A549 (cell line): ENCODE measurements at regions of chr22 and their contacts with region 1.

Region 1: GRCh38 chr22:17057959-17058814 is 26.6 kb upstream of the IL17RA start:
- DNase-seq: peak; percentile 37 to 68
- ATAC-seq: peak; percentile 84 to 96; a peak in 5 of 6 replicates
- H3K4me3 ChIP-seq: no peak overlapping the region
- H3K27ac ChIP-seq: no peak overlapping the region
- H3K4me1 ChIP-seq: no peaks in the 10 kb centered on the region
- CTCF ChIP-seq: peak; percentile 56
- EP300 ChIP-seq: no peak
- POLR2A ChIP-seq: no peak
- RAD21 ChIP-seq: peak; percentile 54 to 66

Region 2: DNA sequence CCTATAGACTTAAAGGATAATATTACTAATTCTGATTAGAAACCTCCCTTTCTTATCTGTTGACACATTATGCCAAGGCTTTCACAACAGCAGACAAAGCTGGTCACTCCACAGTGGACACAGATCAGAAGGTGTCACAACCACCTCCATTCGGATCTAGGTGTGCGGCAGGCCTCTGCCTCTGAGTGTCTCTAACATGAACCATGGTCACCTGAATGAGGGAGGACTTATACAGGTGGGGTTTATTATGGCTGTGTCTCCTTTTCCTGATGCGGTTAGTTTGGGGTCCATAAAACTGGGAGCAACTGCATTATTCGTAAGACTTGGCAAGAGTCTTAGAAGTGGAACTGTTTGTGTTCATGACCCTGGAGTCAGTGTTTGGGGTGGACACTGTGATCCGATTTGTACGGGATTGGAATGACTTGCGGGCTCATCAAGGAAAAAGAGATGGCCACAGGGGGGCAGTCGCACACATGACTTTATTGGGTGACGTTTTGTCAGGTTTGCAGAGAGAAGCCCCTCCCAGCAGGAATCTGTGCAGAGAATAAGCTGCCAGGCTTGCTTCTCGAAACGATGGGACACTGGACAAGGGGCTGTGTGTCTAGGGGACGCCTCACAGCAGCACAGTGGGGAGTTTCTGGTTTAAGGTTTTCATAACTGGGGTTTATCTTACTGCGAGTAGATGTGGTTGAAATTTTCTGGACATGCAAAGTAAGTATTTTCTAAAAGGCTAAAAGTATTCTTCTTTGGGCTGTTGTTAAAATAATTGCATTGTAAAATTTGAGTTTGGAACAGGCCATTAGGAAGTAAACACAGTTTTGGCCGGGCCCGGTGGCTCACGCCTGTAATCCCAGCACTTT is 140.8 kb before region 1 on chr22:
- CTCF ChIA-PET with region 1: interaction called, 36 read pairs
- POLR2A ChIA-PET with region 1: no interaction called
- DNase-seq: peak; percentile 33 to 65
- ATAC-seq: peak; percentile 83 to 87
- H3K4me3 ChIP-seq: no peak overlapping the region
- H3K27ac ChIP-seq: no peak overlapping the region
- H3K4me1 ChIP-seq: no peaks in the 10 kb centered on the region
- CTCF ChIP-seq: peak; percentile 35; the same call in 2 of the 3 replicates
- EP300 ChIP-seq: no peak
- POLR2A ChIP-seq: no peak
- RAD21 ChIP-seq: peak; percentile 47 to 48; a peak in 3 of 5 replicates

Region 3: GRCh38 chr22:16925407-16925966 is 132.7 kb before region 1 on chr22:
- CTCF ChIA-PET with region 1: interaction called, 24 read pairs
- POLR2A ChIA-PET with region 1: no interaction called
- DNase-seq: no peak
- ATAC-seq: no peak
- H3K4me3 ChIP-seq: no peak overlapping the region
- H3K27ac ChIP-seq: no peak overlapping the region
- H3K4me1 ChIP-seq: no peaks in the 10 kb centered on the region
- CTCF ChIP-seq: no peak
- EP300 ChIP-seq: no peak
- POLR2A ChIP-seq: no peak
- RAD21 ChIP-seq: no peak

Region 4: DNA sequence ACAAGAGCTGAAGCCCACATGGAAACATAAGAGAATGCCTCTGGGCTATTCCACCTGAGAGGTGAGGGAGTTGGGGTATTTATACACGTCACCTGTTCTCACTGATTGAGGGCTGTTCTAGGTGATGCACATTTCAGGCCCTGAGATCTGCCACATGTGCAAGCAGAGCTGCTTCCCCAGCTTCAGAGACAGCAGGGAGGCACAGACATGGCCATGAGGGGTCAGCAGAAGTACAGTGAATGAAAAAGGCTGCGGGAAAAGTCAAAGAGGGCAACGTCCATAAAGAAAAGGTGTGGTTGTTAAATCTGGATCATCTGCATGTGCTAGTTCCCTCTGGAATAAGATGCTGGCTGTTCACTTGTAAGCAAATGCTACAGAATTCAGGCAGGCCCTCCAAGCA is 125.6 kb before region 1 on chr22:
- CTCF ChIA-PET with region 1: interaction called, 24 read pairs
- POLR2A ChIA-PET with region 1: no interaction called
- DNase-seq: peak in 1 of 2 experiments; percentile 13
- ATAC-seq: peak; percentile 62 to 74; a peak in 4 of 6 replicates
- H3K4me3 ChIP-seq: no peak overlapping the region
- H3K27ac ChIP-seq: no peak overlapping the region
- H3K4me1 ChIP-seq: no peaks in the 10 kb centered on the region
- CTCF ChIP-seq: no peak
- EP300 ChIP-seq: no peak
- POLR2A ChIP-seq: no peak
- RAD21 ChIP-seq: peak; percentile 31 to 38; a peak in 3 of 5 replicates

Region 5: DNA sequence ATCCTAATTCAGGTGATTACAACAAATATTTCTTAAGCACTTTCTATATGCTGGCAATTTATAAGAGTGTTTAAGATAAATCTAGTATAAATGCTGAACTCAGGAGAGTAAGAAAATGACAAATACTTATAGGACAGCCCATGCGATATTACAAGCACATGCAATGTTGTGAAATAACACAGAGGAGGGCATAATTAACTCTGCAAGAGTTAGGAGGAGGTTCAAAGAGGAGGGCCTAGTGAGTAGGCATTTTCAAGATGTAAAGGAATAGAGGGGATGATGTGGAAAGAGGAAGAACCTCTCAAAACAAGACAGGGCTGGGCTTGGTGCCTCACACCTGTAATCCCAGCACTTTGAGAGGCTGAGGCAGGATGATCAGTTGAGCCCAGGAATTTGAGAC is 10.5 kb before region 1 on chr22:
- CTCF ChIA-PET with region 1: interaction called, 13 read pairs
- POLR2A ChIA-PET with region 1: no interaction called
- DNase-seq: no peak
- ATAC-seq: no peak
- H3K4me3 ChIP-seq: no peak overlapping the region
- H3K27ac ChIP-seq: no peak overlapping the region
- H3K4me1 ChIP-seq: no peaks in the 10 kb centered on the region
- CTCF ChIP-seq: no peak
- EP300 ChIP-seq: no peak
- POLR2A ChIP-seq: no peak
- RAD21 ChIP-seq: no peak

Region 6: DNA sequence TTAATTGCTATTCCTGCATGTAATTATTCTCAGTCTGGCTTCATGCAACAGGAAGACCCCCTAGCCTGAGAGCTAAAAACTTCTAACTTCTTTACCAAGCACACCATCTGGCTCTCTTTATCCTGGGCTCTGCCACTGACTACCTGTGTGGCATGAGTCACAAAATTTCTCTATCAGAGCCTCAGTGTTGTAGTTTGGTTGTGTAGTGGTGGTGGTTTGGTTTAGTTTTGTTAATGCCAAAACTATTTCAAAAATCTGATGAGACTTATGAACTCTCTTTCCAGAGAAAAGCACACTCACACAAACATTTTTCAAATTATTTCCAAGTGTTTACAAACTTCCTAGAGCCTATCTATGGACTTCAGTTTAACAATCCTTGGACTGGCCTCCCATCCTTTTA is 19.1 kb after region 1 on chr22:
- CTCF ChIA-PET with region 1: interaction called, 12 read pairs
- POLR2A ChIA-PET with region 1: no interaction called
- DNase-seq: no peak
- ATAC-seq: no peak
- H3K4me3 ChIP-seq: no peak overlapping the region
- H3K27ac ChIP-seq: no peak overlapping the region
- H3K4me1 ChIP-seq: peaks cover 12% of the 10 kb centered on the region; the same call in 2 of the 3 replicates
- CTCF ChIP-seq: no peak
- EP300 ChIP-seq: no peak
- POLR2A ChIP-seq: no peak
- RAD21 ChIP-seq: no peak

Region 7: DNA sequence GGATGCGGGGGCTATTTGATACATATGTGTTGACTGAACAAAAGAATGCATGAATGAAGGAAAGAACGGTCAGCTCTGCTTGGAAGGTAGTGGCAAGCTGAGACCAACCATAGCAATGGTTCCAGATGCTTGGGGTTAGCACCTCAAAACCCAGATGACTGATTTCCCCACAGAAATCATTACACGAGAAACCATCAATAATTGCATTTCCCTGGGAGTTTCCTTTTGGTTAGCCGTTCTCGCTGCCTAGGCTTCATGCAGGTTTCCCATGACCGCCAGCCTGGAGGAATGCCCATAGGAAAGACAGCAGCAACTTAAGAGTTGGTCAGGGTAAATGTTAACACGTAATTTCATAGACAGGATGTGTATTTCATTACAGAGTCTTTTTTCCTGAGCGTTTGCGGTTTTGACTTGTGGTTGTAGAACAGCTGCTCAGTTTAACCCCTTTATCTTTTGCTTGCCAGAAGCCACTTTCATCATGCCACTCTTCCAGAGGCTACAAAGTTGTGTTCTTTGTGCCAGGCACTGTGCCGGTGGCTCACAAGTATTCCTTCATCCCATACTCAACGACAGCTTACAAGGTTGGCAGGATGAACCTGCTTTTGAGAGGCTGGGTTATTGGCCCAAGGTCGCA is 29.4 kb after region 1 on chr22:
- CTCF ChIA-PET with region 1: no interaction called
- POLR2A ChIA-PET with region 1: no interaction called
- DNase-seq: no peak
- ATAC-seq: no peak
- H3K4me3 ChIP-seq: no peak overlapping the region
- H3K27ac ChIP-seq: no peak overlapping the region
- H3K4me1 ChIP-seq: peaks cover 3% of the 10 kb centered on the region; the same call in 1 of the 3 replicates
- CTCF ChIP-seq: no peak
- EP300 ChIP-seq: no peak
- POLR2A ChIP-seq: no peak
- RAD21 ChIP-seq: no peak

Region 8: DNA sequence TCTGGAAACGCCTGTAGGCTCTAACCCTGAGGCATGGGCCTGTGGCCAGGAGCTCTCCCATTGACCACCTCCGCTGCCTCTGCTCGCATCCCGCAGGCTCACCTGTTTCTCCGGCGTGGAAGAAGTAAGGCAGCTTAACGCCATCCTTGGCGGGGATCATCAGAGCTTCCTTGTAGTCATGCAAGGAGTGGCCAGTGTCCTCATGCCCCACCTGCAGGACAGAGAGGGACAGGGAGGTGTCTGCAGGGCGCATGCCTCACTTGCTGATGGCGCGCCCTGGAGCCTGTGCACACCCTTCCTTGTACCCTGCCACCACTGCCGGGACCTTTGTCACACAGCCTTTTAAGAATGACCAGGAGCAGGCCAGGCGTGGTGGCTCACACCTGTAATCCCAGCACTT is 130.1 kb after region 1 on chr22:
- CTCF ChIA-PET with region 1: no interaction called
- POLR2A ChIA-PET with region 1: no interaction called
- DNase-seq: no peak
- ATAC-seq: no peak
- H3K4me3 ChIP-seq: no peak overlapping the region
- H3K27ac ChIP-seq: no peak overlapping the region
- H3K4me1 ChIP-seq: 0 out of 3 replicates have a peak, but pooled peaks cover 4% of the 10 kb centered on the region
- CTCF ChIP-seq: no peak
- EP300 ChIP-seq: no peak
- POLR2A ChIP-seq: no peak
- RAD21 ChIP-seq: no peak

Region 9: GRCh38 chr22:17501679-17502285 is 443.6 kb after region 1 on chr22:
- CTCF ChIA-PET with region 1: interaction called, 13 read pairs
- POLR2A ChIA-PET with region 1: no interaction called
- DNase-seq: peak; percentile 33 to 67
- ATAC-seq: peak; percentile 93 to 94
- H3K4me3 ChIP-seq: no peak overlapping the region
- H3K27ac ChIP-seq: no peak overlapping the region
- H3K4me1 ChIP-seq: no peaks in the 10 kb centered on the region
- CTCF ChIP-seq: peak; percentile 69
- EP300 ChIP-seq: no peak
- POLR2A ChIP-seq: no peak
- RAD21 ChIP-seq: peak; percentile 78 to 82